WTC11 (cell line): ENCODE measurements at regions of chr22 and their contacts with region 1.

Region 1: GRCh38 chr22:49434101-49434611 is 393.5 kb downstream of the BRD1 start:
- DNase-seq: peak; percentile 67
- ATAC-seq: peak; percentile 94
- H3K4me3 Mint-ChIP-seq: no peak overlapping the region
- H3K27ac Mint-ChIP-seq: no peak overlapping the region
- H3K4me1 Mint-ChIP-seq: no peaks in the 10 kb centered on the region
- H3K27me3 Mint-ChIP-seq: no peaks in the 10 kb centered on the region
- CTCF ChIP-seq: 0 out of 2 replicates have a peak, but pooled peaks have one; percentile 24

Region 2: GRCh38 chr22:49294656-49295464 is 139.3 kb before region 1 on chr22:
- CTCF ChIA-PET with region 1: no interaction called
- POLR2A ChIA-PET with region 1: no interaction called
- DNase-seq: no peak
- ATAC-seq: no peak
- H3K4me3 Mint-ChIP-seq: no peak overlapping the region
- H3K27ac Mint-ChIP-seq: no peak overlapping the region
- H3K4me1 Mint-ChIP-seq: peaks cover 22% of the 10 kb centered on the region
- H3K27me3 Mint-ChIP-seq: peaks cover 13% of the 10 kb centered on the region
- CTCF ChIP-seq: no peak

Region 3: DNA sequence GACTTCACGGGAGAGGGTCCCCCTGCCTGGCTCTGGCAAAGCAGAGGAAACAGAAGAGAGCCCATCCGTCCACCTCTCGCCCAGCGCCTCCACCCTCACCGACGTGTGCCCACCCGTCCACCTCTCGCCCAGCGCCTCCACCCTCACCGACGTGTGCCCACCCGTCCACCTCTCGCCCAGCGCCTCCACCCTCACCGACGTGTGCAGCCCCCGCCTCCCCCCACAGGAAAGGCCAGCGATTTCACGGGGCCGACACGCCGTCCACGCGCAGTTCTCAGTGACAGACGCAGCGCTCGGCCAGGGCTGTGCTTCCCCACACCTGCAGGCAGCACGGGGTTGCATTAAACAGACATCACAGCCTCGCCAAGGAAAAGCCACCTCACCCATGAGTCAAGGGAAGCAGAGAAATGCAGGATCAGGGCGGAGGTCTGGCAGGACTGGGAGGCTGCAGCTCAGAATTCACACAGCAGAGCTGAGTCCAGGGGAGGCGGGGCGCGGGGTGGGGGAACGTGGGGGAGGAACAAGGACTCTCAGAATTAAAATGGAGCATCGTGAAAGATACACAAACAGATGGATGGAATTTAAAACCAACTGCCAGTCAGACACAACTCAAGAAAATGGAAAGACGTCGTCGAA is 15.8 kb after region 1 on chr22:
- CTCF ChIA-PET with region 1: interaction called, 15 read pairs
- POLR2A ChIA-PET with region 1: no interaction called
- DNase-seq: no peak
- ATAC-seq: peak; percentile 76
- H3K4me3 Mint-ChIP-seq: peak overlapping the region; percentile 60
- H3K27ac Mint-ChIP-seq: peak overlapping the region; percentile 86
- H3K4me1 Mint-ChIP-seq: peaks cover 40% of the 10 kb centered on the region
- H3K27me3 Mint-ChIP-seq: peaks cover 8% of the 10 kb centered on the region; the same call in 1 of the 2 replicates
- CTCF ChIP-seq: no peak

Region 4: GRCh38 chr22:49538006-49538405 is 103.8 kb after region 1 on chr22:
- CTCF ChIA-PET with region 1: interaction called, 11 read pairs
- POLR2A ChIA-PET with region 1: no interaction called
- DNase-seq: no peak
- ATAC-seq: no peak
- H3K4me3 Mint-ChIP-seq: no peak overlapping the region
- H3K27ac Mint-ChIP-seq: peak overlapping the region; percentile 88
- H3K4me1 Mint-ChIP-seq: peaks cover 56% of the 10 kb centered on the region
- H3K27me3 Mint-ChIP-seq: no peaks in the 10 kb centered on the region
- CTCF ChIP-seq: no peak

Region 5: GRCh38 chr22:49621661-49622171 is 187.6 kb after region 1 on chr22:
- CTCF ChIA-PET with region 1: interaction called, 10 read pairs
- POLR2A ChIA-PET with region 1: interaction called, 4 read pairs
- DNase-seq: peak; percentile 7
- ATAC-seq: no peak
- H3K4me3 Mint-ChIP-seq: no peak overlapping the region
- H3K27ac Mint-ChIP-seq: no peak overlapping the region
- H3K4me1 Mint-ChIP-seq: no peaks in the 10 kb centered on the region
- H3K27me3 Mint-ChIP-seq: peaks cover 2% of the 10 kb centered on the region; the same call in 1 of the 2 replicates
- CTCF ChIP-seq: no peak

Region 6: GRCh38 chr22:49724893-49725474 is 290.8 kb after region 1 on chr22:
- CTCF ChIA-PET with region 1: interaction called, 13 read pairs
- POLR2A ChIA-PET with region 1: no interaction called
- DNase-seq: peak; percentile 85
- ATAC-seq: peak; percentile 97
- H3K4me3 Mint-ChIP-seq: no peak overlapping the region
- H3K27ac Mint-ChIP-seq: no peak overlapping the region
- H3K4me1 Mint-ChIP-seq: no peaks in the 10 kb centered on the region
- H3K27me3 Mint-ChIP-seq: peaks cover 32% of the 10 kb centered on the region
- CTCF ChIP-seq: peak; percentile 33; the same call in 1 of the 2 replicates